ENCODE measurements at regions of chr21 and their contacts with region 1.

Region 1: GRCh38 chr21:41283211-41283818 is 33.3 kb upstream of the FAM3B start:
- DNase-seq: peak; percentile 77
- CTCF ChIP-seq: peak; percentile 83

Region 2: GRCh38 chr21:41247561-41248284 is 35.6 kb before region 1 on chr21:
- CTCF ChIA-PET with region 1: no interaction called
- POLR2A ChIA-PET with region 1: no interaction called
- DNase-seq: no peak
- CTCF ChIP-seq: no peak

Region 3: GRCh38 chr21:41294539-41295231 is 11.4 kb after region 1 on chr21:
- CTCF ChIA-PET with region 1: interaction called, 12 read pairs
- POLR2A ChIA-PET with region 1: no interaction called
- DNase-seq: no peak
- CTCF ChIP-seq: no peak

Region 4: DNA sequence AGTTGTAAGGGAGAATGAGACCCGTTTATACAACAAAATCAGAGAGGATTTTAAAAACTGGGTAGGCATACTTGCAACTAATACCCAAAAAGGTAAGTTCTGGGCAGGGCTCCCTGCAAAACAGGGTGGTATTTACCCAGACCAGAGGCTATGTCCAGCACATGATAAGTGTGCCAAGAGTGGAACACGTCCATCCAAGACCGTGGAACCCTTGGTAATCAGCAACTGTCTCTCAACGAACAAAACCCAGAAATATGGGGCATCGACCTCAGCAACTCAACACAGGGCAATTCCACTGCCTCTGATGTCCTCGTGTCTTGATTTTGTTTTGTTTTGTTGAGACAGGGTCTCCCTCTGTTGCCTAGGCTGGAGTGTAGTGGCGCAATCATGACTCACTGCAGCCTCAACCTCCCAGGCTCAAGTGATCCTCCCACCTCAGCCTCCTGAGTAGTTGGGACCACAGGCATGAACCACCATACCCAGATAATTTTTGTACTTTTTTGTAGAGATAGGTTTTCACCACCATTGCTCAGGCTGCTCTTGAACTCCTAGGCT is 116.0 kb after region 1 on chr21:
- CTCF ChIA-PET with region 1: interaction called, 12 read pairs
- POLR2A ChIA-PET with region 1: no interaction called
- DNase-seq: no peak
- CTCF ChIP-seq: no peak

Region 5: DNA sequence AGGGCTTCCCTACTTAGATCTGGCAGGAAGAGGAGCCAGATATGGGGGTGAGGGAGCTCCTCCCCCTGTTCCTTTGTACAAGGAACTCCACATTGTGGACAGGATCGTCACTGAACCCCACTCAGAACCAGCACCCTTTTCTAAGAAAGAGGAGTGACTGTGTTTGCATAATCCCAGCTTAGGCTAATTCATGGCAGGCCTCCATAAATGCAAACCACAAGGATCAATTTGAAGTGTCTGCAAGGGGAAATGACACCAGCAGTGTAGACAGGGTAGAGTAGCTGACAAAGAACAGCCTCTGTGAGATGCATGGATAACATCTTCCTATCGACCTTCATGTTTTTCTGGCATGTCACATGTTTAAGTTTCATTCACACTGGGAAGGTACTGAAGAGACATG is 154.4 kb after region 1 on chr21:
- CTCF ChIA-PET with region 1: interaction called, 11 read pairs
- POLR2A ChIA-PET with region 1: no interaction called
- DNase-seq: no peak
- CTCF ChIP-seq: no peak

Region 6: GRCh38 chr21:41470054-41470453 is 186.7 kb after region 1 on chr21:
- CTCF ChIA-PET with region 1: interaction called, 10 read pairs
- POLR2A ChIA-PET with region 1: no interaction called
- DNase-seq: no peak
- CTCF ChIP-seq: no peak

Measured in GM10248 (cell line).